Caki2 (cell line): ENCODE measurements at regions of chr20 and their contacts with region 1.

Region 1: DNA sequence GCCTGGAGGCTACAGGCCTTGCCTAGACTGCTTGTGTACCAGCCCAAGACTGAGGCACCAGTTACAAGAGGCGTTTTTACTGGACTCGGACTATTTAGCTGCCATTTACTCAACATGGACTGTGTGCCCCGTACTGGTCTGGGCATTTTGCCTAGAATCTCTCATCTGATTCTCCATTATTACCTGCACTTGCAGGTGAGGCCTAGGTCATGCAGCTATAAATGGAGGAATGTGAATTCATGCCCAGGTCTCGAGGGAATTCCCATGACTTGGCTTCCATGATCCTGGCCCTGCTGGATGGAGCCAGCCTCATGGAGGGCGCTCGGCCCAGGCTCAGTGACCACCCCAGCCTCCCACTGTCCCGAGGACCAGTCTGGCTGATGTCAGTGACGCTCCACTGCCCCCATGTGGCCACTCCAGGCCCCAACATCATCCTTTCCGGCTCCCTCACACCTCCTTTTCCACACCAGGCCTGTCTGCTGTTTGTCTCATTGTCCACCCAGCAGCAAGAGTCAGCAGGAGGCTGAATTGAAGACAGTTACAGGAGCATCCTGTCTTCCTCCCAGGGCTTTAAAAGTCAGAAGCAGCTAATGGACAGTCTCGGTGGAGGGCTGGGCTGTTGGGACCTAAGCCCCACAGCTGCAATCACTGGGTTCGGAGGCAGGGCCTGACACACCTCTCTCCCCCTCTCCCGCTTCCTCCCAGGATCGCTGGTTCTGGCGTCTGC is 8.7 kb downstream of the MMP24OS start:
- DNase-seq: peak; percentile 61

Region 2: GRCh38 chr20:35199748-35200162 is 69.5 kb before region 1 on chr20:
- in situ Hi-C with region 1: loop called (anchors 10 kb)
- DNase-seq: peak; percentile 28